Prostate gland (tissue), 2 donors: ENCODE measurements at regions of chr3 and their contacts with region 1.

Region 1: GRCh38 chr3:47836986-47837385 is 34.0 kb downstream of the DHX30 start:
- DNase-seq: no peak
- H3K4me3 ChIP-seq: no peak overlapping the region
- H3K27ac ChIP-seq: no peak overlapping the region
- H3K4me1 ChIP-seq: no peaks in the 10 kb centered on the region
- H3K27me3 ChIP-seq: no peaks in the 10 kb centered on the region
- CTCF ChIP-seq: no peak
- POLR2A ChIP-seq: no peak

Region 2: DNA sequence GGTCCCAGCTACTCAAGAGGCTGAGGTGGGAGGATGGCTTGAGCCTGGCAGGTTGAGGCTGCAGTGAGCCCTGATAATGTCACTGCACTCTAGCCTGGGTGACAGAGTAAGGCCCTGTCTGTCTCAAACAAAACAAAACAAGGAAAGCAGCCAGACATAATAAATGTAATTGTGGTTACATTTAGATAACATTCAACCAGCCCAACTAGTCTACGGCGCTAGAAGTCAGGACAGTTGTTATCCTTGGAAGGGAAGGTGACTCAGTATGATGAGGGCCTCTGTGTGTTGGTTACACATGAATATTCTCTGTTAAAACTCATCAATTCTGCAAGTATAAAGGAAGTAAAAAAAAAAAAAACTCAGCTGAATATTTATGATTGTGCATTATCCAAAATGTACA is 231.3 kb before region 1 on chr3:
- intact Hi-C with region 1: no loop called
- DNase-seq: no peak
- H3K4me3 ChIP-seq: no peak overlapping the region
- H3K27ac ChIP-seq: no peak overlapping the region
- H3K4me1 ChIP-seq: no peaks in the 10 kb centered on the region
- H3K27me3 ChIP-seq: no peaks in the 10 kb centered on the region
- CTCF ChIP-seq: no peak
- POLR2A ChIP-seq: no peak

Region 3: DNA sequence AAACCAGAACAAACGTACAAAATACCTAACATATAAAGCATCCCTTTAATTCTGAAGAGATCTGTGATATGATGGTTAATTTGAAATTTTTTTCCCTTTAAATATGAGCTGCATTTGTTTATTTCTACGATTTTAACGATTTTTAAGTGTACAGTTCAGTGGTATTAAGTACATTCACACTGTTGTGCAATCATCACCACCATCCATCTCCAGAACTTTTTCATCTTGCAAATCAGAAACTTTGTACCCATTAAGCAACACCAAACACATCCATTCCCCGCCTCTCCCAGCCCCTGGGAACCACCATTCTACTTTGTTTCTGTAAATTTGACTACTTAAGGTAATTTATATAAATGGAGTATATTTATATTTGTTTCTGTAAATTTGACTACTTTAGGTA is 127.8 kb after region 1 on chr3:
- intact Hi-C with region 1: no loop called
- DNase-seq: no peak
- H3K4me3 ChIP-seq: no peak overlapping the region
- H3K27ac ChIP-seq: no peak overlapping the region
- H3K4me1 ChIP-seq: peaks cover 3% of the 10 kb centered on the region
- H3K27me3 ChIP-seq: no peaks in the 10 kb centered on the region
- CTCF ChIP-seq: no peak
- POLR2A ChIP-seq: no peak

Region 4: DNA sequence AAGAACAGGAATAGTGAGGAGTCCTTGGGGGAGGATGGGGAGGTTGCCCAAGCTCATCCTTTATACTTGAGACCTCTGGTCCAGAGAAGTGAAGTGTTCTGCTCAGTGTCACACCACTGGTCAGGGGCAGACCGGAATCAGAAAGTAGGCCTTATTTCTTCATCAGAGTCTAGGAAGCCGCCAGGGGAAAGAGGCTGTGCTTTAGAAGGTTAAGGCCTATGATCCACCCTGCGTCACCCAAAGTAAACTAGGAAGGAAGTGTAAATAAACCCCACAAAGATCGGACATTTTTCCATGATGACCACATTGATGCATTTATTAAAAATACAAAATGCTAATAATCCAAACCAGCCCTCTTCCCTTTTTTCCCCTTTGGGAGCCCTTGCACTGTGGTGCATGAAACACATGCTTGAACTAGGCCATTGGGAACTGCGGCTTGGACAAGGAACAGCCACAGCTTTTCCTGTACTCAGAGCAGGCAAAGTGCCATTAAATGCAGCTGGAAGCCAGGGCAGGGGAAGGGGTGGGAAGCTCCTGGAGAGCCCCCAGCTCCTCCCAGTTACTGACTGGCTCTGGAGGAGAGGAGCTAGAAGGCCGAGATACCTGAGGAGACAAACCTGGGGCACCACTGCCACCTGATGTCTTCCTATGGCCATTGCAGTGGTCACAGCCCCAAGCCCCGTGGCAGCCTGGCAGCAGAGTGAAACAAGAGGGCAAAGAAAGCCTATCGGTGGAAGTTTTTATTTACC is 314.2 kb after region 1 on chr3:
- intact Hi-C with region 1: loop called (anchors 5 kb)
- DNase-seq: peak; percentile 57
- H3K4me3 ChIP-seq: no peak overlapping the region
- H3K27ac ChIP-seq: peak overlapping the region in 1 of 2 donors; percentile 15
- H3K4me1 ChIP-seq: no peaks in the 10 kb centered on the region
- H3K27me3 ChIP-seq: no peaks in the 10 kb centered on the region
- CTCF ChIP-seq: peak in 3 of 4 experiments; percentile 43 to 82 (median 81)
- POLR2A ChIP-seq: no peak